Activated CD4-positive, alpha-beta T cell treated with anti-CD3 and anti-CD28 coated beads, Interleukin-2, amount 10 ng/mL, durations not matched to agents 24 days and 14 days (primary cell): ENCODE measurements at regions of chr1 and their contacts with region 1.

Region 1: GRCh38 chr1:13662493-13662892 is 37.5 kb upstream of the PRDM2 start:
- DNase-seq: no peak
- H3K4me3 Mint-ChIP-seq: no peak overlapping the region
- H3K27ac Mint-ChIP-seq: no peak overlapping the region
- H3K4me1 Mint-ChIP-seq: no peaks in the 10 kb centered on the region
- H3K27me3 Mint-ChIP-seq: peaks cover 6% of the 10 kb centered on the region

Region 2: GRCh38 chr1:13687151-13687715 is 24.7 kb after region 1 on chr1:
- intact Hi-C with region 1: no loop called
- DNase-seq: no peak
- H3K4me3 Mint-ChIP-seq: no peak overlapping the region
- H3K27ac Mint-ChIP-seq: no peak overlapping the region
- H3K4me1 Mint-ChIP-seq: no peaks in the 10 kb centered on the region
- H3K27me3 Mint-ChIP-seq: peaks cover 25% of the 10 kb centered on the region

Region 3: DNA sequence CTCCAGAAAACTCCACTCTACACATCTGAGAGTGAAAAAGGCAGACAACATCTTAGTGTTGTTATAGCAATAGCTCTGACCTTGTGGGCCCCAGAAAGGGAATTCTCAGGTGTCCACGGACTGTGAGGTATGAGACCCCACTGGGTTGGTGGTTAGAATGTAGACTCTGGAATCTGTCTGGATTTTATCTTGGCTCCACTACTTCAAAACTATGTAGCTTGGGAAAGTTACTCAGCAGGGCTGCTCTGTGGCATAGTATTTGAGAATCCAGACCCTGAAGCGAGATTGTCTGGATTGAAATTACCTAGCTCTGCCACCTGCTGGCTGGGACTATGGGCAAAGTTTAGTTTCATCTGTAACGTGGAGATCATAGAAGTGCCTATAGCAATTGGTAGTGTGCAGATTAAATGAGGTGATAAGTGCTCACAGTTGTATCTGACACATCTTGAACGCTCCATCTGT is 63.3 kb after region 1 on chr1:
- intact Hi-C with region 1: loop called (anchors 1 kb)
- DNase-seq: peak; percentile 85
- H3K4me3 Mint-ChIP-seq: no peak overlapping the region
- H3K27ac Mint-ChIP-seq: no peak overlapping the region
- H3K4me1 Mint-ChIP-seq: peaks cover 28% of the 10 kb centered on the region
- H3K27me3 Mint-ChIP-seq: no peaks in the 10 kb centered on the region

Region 4: DNA sequence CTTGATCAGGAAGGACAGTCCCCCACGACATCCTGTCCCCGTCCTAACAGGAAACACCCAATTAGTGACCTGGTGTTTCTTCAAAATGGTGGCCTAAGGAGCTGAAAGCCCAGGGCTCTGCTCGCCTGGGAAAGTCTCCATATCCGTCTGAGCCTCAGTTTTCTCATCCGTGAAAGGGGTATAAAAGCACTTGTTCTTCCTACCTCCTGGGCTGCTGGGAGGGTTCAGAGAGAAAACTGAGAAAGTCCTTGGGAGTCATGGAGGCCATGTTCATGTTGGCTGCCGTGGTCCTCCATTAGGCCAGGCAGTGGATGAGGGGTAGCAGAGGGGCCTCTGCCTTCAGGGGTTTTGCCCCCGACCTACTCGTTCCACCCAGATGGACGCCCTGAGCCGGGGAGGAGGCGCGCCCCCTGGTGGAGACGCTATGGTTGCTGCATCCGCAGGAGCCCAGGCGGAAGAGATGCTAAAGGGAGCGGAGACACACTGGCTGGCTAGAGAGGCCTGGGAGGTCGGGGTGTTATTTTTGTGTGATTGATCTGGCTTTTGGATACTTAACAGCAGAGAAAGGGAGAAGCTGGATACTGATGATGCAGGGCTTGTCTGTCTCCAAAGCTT is 151.0 kb after region 1 on chr1:
- intact Hi-C with region 1: loop called (anchors 1 kb)
- DNase-seq: peak; percentile 85
- H3K4me3 Mint-ChIP-seq: no peak overlapping the region
- H3K27ac Mint-ChIP-seq: no peak overlapping the region
- H3K4me1 Mint-ChIP-seq: peaks cover 2% of the 10 kb centered on the region
- H3K27me3 Mint-ChIP-seq: no peaks in the 10 kb centered on the region

Region 5: DNA sequence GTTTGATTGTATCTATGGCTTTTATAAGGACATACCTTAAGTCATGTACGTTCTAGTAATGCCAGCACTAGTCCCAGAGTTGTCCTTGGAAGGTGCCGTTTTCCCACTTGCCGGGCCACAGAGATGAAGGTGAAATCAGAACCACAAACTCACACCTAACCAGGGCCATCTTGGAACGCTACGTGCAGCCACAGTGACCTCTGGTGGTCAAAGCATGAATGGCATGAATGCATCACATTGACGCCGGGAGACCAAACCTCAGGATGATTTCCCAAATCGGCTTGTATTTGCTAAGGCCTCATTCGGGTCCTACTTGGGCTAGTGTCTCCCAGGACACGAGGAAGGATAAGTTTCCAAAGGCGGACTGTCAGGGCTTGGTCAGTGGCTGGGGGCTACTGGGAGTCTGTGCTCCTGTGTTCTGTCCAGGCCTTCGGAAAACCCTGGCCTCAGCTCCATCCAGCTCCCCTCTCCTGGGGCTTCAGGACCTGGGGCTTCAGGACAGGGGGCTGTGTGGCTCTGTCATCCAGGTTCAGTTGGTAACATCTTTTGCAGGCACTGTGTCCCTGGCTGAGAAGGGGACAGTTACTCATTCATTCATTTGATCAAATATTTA is 298.0 kb after region 1 on chr1:
- intact Hi-C with region 1: loop called (anchors 1 kb)
- DNase-seq: peak; percentile 88
- H3K4me3 Mint-ChIP-seq: no peak overlapping the region
- H3K27ac Mint-ChIP-seq: no peak overlapping the region
- H3K4me1 Mint-ChIP-seq: no peaks in the 10 kb centered on the region
- H3K27me3 Mint-ChIP-seq: peaks cover 4% of the 10 kb centered on the region

Region 6: GRCh38 chr1:14010431-14010830 is 347.9 kb after region 1 on chr1:
- intact Hi-C with region 1: no loop called
- DNase-seq: no peak
- H3K4me3 Mint-ChIP-seq: no peak overlapping the region
- H3K27ac Mint-ChIP-seq: no peak overlapping the region
- H3K4me1 Mint-ChIP-seq: no peaks in the 10 kb centered on the region
- H3K27me3 Mint-ChIP-seq: no peaks in the 10 kb centered on the region